Cardiac septum (tissue), 1 donor: ENCODE measurements at regions of chr14 and their contacts with region 1.

Region 1: DNA sequence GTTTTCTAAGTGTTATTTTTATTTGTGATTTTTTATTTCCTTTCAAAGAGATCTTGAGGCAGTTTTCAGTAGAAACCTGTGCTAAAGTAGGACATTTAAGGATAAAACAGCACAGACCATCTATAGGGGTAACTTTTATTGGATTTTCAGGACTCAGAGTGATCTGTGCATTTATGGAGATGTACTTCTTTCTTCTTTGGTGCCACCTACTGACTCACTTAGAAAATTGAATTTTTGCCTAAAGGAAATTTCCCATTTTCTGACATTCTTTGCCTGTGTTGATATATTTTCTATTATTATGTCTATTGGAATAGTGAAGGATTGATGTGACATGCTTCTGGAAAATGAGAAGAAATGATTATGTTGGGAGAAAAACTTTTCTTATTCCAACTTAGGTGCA is 113.0 kb downstream of the UNC79 start:
- DNase-seq: no peak

Region 2: DNA sequence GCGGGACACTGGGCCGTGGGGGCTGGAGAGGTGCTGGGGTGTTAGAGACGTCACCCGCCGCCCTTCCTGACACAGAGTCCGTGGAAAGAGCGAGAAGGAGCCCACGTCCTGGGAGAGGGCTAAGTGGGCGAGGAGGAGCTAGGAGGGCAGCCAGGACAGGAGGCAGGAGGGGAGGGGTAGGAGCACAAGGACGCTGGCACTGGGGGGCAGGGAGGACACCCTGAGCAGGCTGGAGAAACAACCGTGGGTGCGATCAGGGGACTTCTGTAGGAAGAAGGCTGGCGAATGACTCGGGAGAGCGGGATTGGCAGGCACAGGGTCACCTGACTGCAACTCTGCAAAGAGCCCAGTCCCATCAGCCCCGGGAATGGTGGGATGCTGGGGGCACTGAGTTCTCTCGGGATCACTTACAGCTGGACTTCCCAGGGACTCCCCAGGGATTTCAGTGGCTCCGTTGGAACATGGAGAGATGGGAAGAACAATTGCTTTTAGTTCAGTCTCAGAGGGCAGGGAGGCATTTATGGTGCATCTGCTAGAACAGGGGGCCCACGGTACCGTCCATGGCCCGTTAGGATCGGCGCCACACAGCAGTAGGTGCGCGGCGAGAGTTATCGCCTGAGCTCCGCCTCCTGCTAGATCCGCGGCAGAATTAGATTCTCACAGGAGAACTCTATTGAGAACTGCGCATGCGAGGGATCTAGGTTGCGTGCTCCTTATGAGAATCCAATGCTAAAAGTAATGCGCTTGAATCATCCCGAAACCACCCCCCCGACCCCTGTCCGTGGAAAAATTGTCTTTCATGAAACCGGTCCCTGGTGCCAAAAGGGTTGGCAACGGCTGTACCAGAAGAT is 312.4 kb before region 1 on chr14:
- intact Hi-C with region 1: loop called (anchors 10 kb)
- DNase-seq: no peak

Region 3: GRCh38 chr14:93510066-93510465 is 33.7 kb before region 1 on chr14:
- intact Hi-C with region 1: no loop called
- DNase-seq: no peak